CD14-positive monocyte (primary cell): ENCODE measurements at regions of chr4 and their contacts with region 1.

Region 1: DNA sequence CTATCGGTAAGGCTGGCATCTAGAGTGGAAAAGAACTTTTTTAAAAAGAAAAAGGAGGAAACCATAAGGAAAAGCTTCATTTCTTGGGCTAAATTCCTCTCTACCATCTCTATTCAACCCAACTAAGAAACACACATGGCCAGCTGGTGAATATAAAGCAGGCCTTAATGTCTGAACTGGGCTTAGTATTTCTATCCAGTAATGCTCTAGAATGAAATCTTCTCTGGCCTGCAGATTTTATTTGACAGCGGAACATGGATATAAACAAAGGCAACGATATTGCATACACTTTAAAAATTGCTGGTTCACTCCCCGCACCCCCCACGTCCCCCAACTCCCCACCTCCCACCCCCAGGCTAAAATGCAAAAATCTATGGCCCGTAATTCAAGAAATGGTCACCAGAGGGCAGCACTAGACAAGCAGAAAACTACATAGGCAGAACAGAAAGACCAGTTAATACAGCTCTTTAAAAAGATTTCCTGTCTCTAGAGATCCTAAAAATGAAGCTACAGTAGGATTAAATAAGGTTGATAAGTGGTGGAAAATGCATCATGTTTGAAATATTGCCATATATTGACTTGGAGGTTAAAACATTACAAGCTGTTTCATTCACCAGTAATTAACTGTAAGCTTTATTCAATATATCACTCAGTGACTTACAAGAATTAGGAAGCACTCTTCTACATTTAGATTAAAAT is 155.2 kb upstream of the GALNT7 start:
- DNase-seq: peak; percentile 28 to 41 (median 40)
- H3K4me3 ChIP-seq: no peak overlapping the region
- H3K4me3 Mint-ChIP-seq: no peak overlapping the region
- H3K27ac ChIP-seq: no peak overlapping the region
- H3K27ac Mint-ChIP-seq: no peak overlapping the region
- H3K4me1 ChIP-seq: peaks cover 0 to 18% of the 10 kb centered on the region in 2 donors
- H3K4me1 Mint-ChIP-seq: peaks cover 19% of the 10 kb centered on the region
- H3K27me3 ChIP-seq: no peaks in the 10 kb centered on the region
- H3K27me3 Mint-ChIP-seq: peaks cover 0 to 3% (median 0%) of the 10 kb centered on the region in 3 donors
- CTCF ChIP-seq: peak; percentile 85

Region 2: GRCh38 chr4:173025131-173025530 is 11.8 kb after region 1 on chr4:
- intact Hi-C with region 1: no loop called
- DNase-seq: peak; percentile 40 to 66 (median 60)
- H3K4me3 ChIP-seq: no peak overlapping the region
- H3K4me3 Mint-ChIP-seq: no peak overlapping the region
- H3K27ac ChIP-seq: no peak overlapping the region
- H3K27ac Mint-ChIP-seq: peak overlapping the region in 2 of 7 donors; percentile 24 to 66
- H3K4me1 ChIP-seq: peaks cover 4 to 5% of the 10 kb centered on the region in 2 donors
- H3K4me1 Mint-ChIP-seq: peaks cover 4% of the 10 kb centered on the region
- H3K27me3 ChIP-seq: no peaks in the 10 kb centered on the region
- H3K27me3 Mint-ChIP-seq: peaks cover 0 to 1% (median 0%) of the 10 kb centered on the region in 3 donors
- CTCF ChIP-seq: peak; percentile 72

Region 3: DNA sequence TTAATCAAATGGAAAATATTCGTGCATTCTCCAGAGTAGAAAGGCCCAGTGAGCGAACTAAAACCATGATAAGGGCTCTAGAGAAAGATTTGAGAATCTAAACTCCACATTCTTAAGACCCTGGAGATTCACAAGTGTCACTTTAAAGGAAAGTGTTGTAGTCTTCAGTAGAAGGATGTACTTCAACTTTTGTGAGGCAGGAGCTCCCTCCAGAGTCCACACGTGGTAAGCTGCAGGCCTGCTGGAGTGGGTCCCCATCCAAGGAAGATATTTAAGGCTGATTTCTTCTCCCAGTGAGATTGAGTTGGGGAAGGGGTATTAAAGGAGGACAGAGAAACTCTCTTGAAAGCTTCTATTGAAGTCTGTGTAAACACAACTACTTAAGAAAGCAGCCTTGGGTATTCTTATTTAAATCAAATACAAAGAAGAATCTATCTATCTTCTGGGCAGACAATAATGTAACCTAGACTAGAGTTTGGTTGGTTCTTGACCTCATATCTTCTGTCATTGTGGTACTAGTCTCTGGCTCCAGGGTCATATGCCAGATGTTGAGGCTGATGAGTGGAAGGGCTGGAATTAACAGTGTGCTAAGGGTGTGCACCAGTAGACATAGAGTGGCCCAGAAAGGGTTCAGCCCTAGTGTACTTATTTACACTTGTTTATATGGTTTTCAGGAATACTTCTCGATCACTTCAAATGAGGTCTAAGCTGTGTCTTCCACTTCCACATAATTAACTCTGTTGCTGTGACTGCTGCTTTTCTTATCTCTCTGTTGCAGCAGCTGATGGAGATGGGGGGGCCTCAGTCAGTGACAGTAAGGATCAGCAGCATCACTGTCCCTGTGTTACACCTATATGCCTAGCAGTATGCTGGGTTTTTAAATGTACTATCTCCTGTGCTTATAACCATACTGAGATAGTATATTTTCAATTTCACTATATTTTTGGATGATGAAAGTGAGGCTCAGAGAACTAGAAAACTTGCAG is 244.6 kb after region 1 on chr4:
- intact Hi-C with region 1: loop called (anchors 2 kb)
- DNase-seq: peak; percentile 32 to 55 (median 51)
- H3K4me3 ChIP-seq: no peak overlapping the region
- H3K4me3 Mint-ChIP-seq: no peak overlapping the region
- H3K27ac ChIP-seq: no peak overlapping the region
- H3K27ac Mint-ChIP-seq: peak overlapping the region in 1 of 7 donors; percentile 34
- H3K4me1 ChIP-seq: no peaks in the 10 kb centered on the region
- H3K4me1 Mint-ChIP-seq: peaks cover 7% of the 10 kb centered on the region
- H3K27me3 ChIP-seq: no peaks in the 10 kb centered on the region
- H3K27me3 Mint-ChIP-seq: no peaks in the 10 kb centered on the region
- CTCF ChIP-seq: peak; percentile 79

Region 4: GRCh38 chr4:173301518-173302201 is 288.3 kb after region 1 on chr4:
- intact Hi-C with region 1: loop called in 1 of 2 experiments (anchors 5 kb)
- DNase-seq: peak; percentile 5 to 46 (median 28)
- H3K4me3 ChIP-seq: no peak overlapping the region
- H3K4me3 Mint-ChIP-seq: no peak overlapping the region
- H3K27ac ChIP-seq: no peak overlapping the region
- H3K27ac Mint-ChIP-seq: peak overlapping the region in 1 of 7 donors; percentile 84
- H3K4me1 ChIP-seq: no peaks in the 10 kb centered on the region
- H3K4me1 Mint-ChIP-seq: peaks cover 3% of the 10 kb centered on the region
- H3K27me3 ChIP-seq: no peaks in the 10 kb centered on the region
- H3K27me3 Mint-ChIP-seq: no peaks in the 10 kb centered on the region
- CTCF ChIP-seq: peak; percentile 85